ENCODE measurements at regions of chr2 and their contacts with region 1.

Region 1: GRCh38 chr2:188512456-188512855 is 220.8 kb downstream of the GULP1 start:
- DNase-seq: peak in 1 of 2 experiments; percentile 17
- H3K4me3 ChIP-seq: no peak overlapping the region
- H3K4me3 Mint-ChIP-seq: no peak overlapping the region
- H3K27ac Mint-ChIP-seq: no peak overlapping the region
- H3K4me1 ChIP-seq: no peaks in the 10 kb centered on the region
- H3K4me1 Mint-ChIP-seq: no peaks in the 10 kb centered on the region
- H3K27me3 ChIP-seq: no peaks in the 10 kb centered on the region
- H3K27me3 Mint-ChIP-seq: no peaks in the 10 kb centered on the region
- CTCF ChIP-seq: peak; percentile 51 to 63

Region 2: DNA sequence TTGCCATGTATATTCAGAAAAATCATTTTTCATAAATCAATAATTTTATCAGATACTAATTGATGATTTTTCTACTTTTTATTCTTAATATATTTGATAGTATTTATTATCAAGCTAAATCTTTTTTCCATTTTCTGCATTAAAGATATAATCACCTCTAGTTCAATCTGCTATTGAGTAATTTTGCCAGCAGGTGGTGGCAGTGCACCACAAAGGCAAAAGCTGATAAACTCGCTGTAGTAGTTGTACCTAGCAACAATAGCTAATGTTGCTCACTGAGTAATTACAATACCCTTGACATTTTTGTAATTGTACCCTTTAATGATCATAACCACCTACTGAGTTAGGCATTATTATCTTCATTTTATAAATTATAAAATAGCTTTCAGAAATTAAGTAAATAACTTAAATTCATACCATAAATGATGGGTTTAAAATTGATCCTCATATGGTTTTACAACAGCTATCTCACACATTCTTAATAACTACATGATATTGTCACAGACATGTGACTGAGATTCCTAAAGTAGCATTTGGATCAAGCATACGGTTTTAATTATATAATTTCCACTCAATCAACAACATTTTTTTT is 1012.4 kb before region 1 on chr2:
- CTCF ChIA-PET with region 1: no interaction called
- POLR2A ChIA-PET with region 1: no interaction called
- intact Hi-C with region 1: loop called (anchors 1 kb)
- DNase-seq: peak; percentile 52 to 71
- H3K4me3 ChIP-seq: no peak overlapping the region
- H3K4me3 Mint-ChIP-seq: no peak overlapping the region
- H3K27ac Mint-ChIP-seq: no peak overlapping the region
- H3K4me1 ChIP-seq: peaks cover 7% of the 10 kb centered on the region; the same call in 1 of the 2 replicates
- H3K4me1 Mint-ChIP-seq: peaks cover 19% of the 10 kb centered on the region
- H3K27me3 ChIP-seq: no peaks in the 10 kb centered on the region
- H3K27me3 Mint-ChIP-seq: no peaks in the 10 kb centered on the region
- CTCF ChIP-seq: peak; percentile 80 to 91

Region 3: GRCh38 chr2:187658952-187659525 is 853.4 kb before region 1 on chr2:
- CTCF ChIA-PET with region 1: no interaction called
- POLR2A ChIA-PET with region 1: no interaction called
- intact Hi-C with region 1: loop called (anchors 2 kb)
- DNase-seq: peak in 1 of 2 experiments; percentile 13
- H3K4me3 ChIP-seq: no peak overlapping the region
- H3K4me3 Mint-ChIP-seq: no peak overlapping the region
- H3K27ac Mint-ChIP-seq: no peak overlapping the region
- H3K4me1 ChIP-seq: no peaks in the 10 kb centered on the region
- H3K4me1 Mint-ChIP-seq: no peaks in the 10 kb centered on the region
- H3K27me3 ChIP-seq: no peaks in the 10 kb centered on the region
- H3K27me3 Mint-ChIP-seq: peaks cover 13% of the 10 kb centered on the region
- CTCF ChIP-seq: peak; percentile 35 to 47

Region 4: GRCh38 chr2:187971893-187972292 is 540.6 kb before region 1 on chr2:
- CTCF ChIA-PET with region 1: no interaction called
- POLR2A ChIA-PET with region 1: no interaction called
- intact Hi-C with region 1: loop called (anchors 5 kb)
- DNase-seq: no peak
- H3K4me3 ChIP-seq: no peak overlapping the region
- H3K4me3 Mint-ChIP-seq: no peak overlapping the region
- H3K27ac Mint-ChIP-seq: no peak overlapping the region
- H3K4me1 ChIP-seq: no peaks in the 10 kb centered on the region
- H3K4me1 Mint-ChIP-seq: no peaks in the 10 kb centered on the region
- H3K27me3 ChIP-seq: no peaks in the 10 kb centered on the region
- H3K27me3 Mint-ChIP-seq: peaks cover 3% of the 10 kb centered on the region
- CTCF ChIP-seq: peak in 1 of 2 experiments; percentile 24

Region 5: DNA sequence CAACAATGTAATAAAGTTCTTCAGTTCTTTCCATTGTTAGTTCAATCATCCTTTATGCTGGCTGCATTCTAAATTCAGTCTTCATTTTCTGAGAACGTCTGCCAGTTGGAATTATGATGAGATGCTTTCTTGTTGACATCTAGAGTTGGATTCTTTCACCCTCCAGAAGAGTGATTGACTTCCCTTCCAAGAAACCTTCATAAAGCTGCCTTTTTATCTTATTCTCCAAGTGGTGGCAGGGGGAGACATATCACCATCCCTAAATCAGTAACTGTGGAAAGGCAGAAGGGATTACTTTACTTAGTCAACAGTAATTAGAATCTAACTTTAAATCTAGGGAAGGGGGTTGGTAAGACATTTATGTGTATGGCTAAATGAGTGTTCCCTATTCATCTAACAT is 307.6 kb before region 1 on chr2:
- CTCF ChIA-PET with region 1: no interaction called
- POLR2A ChIA-PET with region 1: no interaction called
- intact Hi-C with region 1: loop called (anchors 2 kb)
- DNase-seq: no peak
- H3K4me3 ChIP-seq: no peak overlapping the region
- H3K4me3 Mint-ChIP-seq: no peak overlapping the region
- H3K27ac Mint-ChIP-seq: no peak overlapping the region
- H3K4me1 ChIP-seq: no peaks in the 10 kb centered on the region
- H3K4me1 Mint-ChIP-seq: no peaks in the 10 kb centered on the region
- H3K27me3 ChIP-seq: no peaks in the 10 kb centered on the region
- H3K27me3 Mint-ChIP-seq: peaks cover 4% of the 10 kb centered on the region
- CTCF ChIP-seq: peak in 1 of 2 experiments; percentile 9

Region 6: GRCh38 chr2:188369365-188369764 is 143.1 kb before region 1 on chr2:
- CTCF ChIA-PET with region 1: interaction called, 3 read pairs
- POLR2A ChIA-PET with region 1: no interaction called
- intact Hi-C with region 1: loop called (anchors 2 kb)
- DNase-seq: peak; percentile 50 to 62
- H3K4me3 ChIP-seq: no peak overlapping the region
- H3K4me3 Mint-ChIP-seq: no peak overlapping the region
- H3K27ac Mint-ChIP-seq: no peak overlapping the region
- H3K4me1 ChIP-seq: peaks cover 5% of the 10 kb centered on the region; the same call in 1 of the 2 replicates
- H3K4me1 Mint-ChIP-seq: peaks cover 10% of the 10 kb centered on the region
- H3K27me3 ChIP-seq: no peaks in the 10 kb centered on the region
- H3K27me3 Mint-ChIP-seq: no peaks in the 10 kb centered on the region
- CTCF ChIP-seq: peak; percentile 73 to 88